Right ventricle myocardium superior (tissue), 1 donor: ENCODE measurements at regions of chr2 and their contacts with region 1.

Region 1: GRCh38 chr2:137467246-137467862 is 496.9 kb upstream of the HNMT start:
- DNase-seq: no peak
- ATAC-seq: peak; percentile 61

Region 2: DNA sequence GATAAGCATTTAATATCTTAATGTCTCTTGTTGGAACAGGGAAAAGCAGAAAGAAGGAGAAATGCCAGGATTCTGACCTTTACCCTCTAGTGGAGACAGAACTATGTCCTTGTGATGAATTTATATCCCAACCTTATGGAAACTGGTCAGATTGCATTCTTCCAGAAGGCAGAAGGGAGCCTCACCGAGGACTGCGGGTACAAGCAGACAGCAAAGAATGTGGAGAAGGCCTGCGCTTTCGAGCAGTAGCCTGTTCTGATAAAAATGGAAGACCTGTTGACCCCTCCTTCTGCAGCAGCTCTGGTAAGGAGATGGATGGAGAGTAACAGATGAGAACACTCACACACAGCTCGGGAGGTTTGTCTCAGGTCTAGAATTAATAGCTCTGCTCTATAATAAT is 55.8 kb before region 1 on chr2:
- intact Hi-C with region 1: no loop called
- DNase-seq: no peak
- ATAC-seq: no peak

Region 3: DNA sequence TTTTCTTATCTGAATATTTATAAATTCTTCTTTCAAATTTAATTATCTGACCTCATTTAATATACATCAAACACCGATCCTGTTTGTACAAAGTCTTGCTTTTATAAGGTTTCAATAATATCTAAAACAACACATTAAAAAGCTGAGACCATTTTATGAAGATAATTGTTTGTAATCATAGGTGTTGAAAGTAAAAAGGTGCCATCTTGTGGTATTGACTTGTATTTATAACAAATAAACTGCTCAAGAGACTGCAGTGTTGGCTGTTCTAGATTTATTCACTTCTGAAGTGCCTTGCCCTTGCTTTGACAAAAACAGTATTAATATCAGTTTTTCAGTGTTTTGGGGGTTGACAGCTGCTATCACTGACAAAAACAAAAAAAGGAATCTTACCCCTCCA is 210.1 kb after region 1 on chr2:
- intact Hi-C with region 1: loop called (anchors 10 kb)
- DNase-seq: no peak
- ATAC-seq: no peak

Region 4: GRCh38 chr2:137838255-137839092 is 371.1 kb after region 1 on chr2:
- intact Hi-C with region 1: loop called (anchors 5 kb)
- DNase-seq: no peak
- ATAC-seq: peak; percentile 59